ENCODE measurements at regions of chr10 and their contacts with region 1.

Region 1: GRCh38 chr10:103745341-103746227 is 109.8 kb downstream of the SH3PXD2A start:
- DNase-seq: peak; percentile 78
- H3K4me3 Mint-ChIP-seq: peak overlapping the region; percentile 19
- H3K27ac Mint-ChIP-seq: peak overlapping the region; percentile 82
- H3K4me1 Mint-ChIP-seq: peaks cover 36% of the 10 kb centered on the region
- H3K27me3 Mint-ChIP-seq: no peaks in the 10 kb centered on the region

Region 2: GRCh38 chr10:103696411-103697145 is 49.0 kb before region 1 on chr10:
- CTCF ChIA-PET with region 1: no interaction called
- intact Hi-C with region 1: loop called (anchors 2 kb)
- DNase-seq: peak; percentile 92
- H3K4me3 Mint-ChIP-seq: peak overlapping the region; percentile 28
- H3K27ac Mint-ChIP-seq: no peak overlapping the region
- H3K4me1 Mint-ChIP-seq: peaks cover 22% of the 10 kb centered on the region
- H3K27me3 Mint-ChIP-seq: no peaks in the 10 kb centered on the region

Region 3: GRCh38 chr10:103759100-103759781 is 13.7 kb after region 1 on chr10:
- CTCF ChIA-PET with region 1: interaction called, 3 read pairs
- intact Hi-C with region 1: loop called (anchors 1 kb)
- DNase-seq: peak; percentile 72
- H3K4me3 Mint-ChIP-seq: no peak overlapping the region
- H3K27ac Mint-ChIP-seq: peak overlapping the region; percentile 32
- H3K4me1 Mint-ChIP-seq: peaks cover 39% of the 10 kb centered on the region
- H3K27me3 Mint-ChIP-seq: no peaks in the 10 kb centered on the region